HepG2 (cell line): ENCODE measurements at regions of chr5 and their contacts with region 1.

Region 1: GRCh38 chr5:135034236-135034962 is 371 bp upstream of the PITX1 start:
- DNase-seq: peak; percentile 52
- ATAC-seq: peak; percentile 72
- H3K4me3 ChIP-seq: peak overlapping the region; percentile 83 to 93 (median 89)
- H3K27ac ChIP-seq: peak overlapping the region; percentile 90
- H3K4me1 ChIP-seq: peaks cover 21% of the 10 kb centered on the region
- H3K27me3 ChIP-seq: no peaks in the 10 kb centered on the region
- CTCF ChIP-seq: no peak
- EP300 ChIP-seq: no peak
- POLR2A ChIP-seq: peak in 1 of 2 experiments; percentile 55; a peak in 2 of 4 replicates
- RAD21 ChIP-seq: peak; percentile 32; the same call in 1 of the 2 replicates

Region 2: GRCh38 chr5:134917070-134917815 is 117.2 kb before region 1 on chr5:
- CTCF ChIA-PET with region 1: no interaction called
- POLR2A ChIA-PET with region 1: interaction called, 4 read pairs
- in situ Hi-C with region 1: no loop called
- intact Hi-C with region 1: loop called (anchors 2 kb)
- DNase-seq: peak; percentile 18
- ATAC-seq: peak; percentile 87
- H3K4me3 ChIP-seq: no peak overlapping the region
- H3K27ac ChIP-seq: no peak overlapping the region
- H3K4me1 ChIP-seq: peaks cover 23% of the 10 kb centered on the region
- H3K27me3 ChIP-seq: no peaks in the 10 kb centered on the region
- CTCF ChIP-seq: peak; percentile 81
- EP300 ChIP-seq: no peak
- POLR2A ChIP-seq: no peak
- RAD21 ChIP-seq: peak; percentile 44; the same call in 1 of the 2 replicates

Region 3: DNA sequence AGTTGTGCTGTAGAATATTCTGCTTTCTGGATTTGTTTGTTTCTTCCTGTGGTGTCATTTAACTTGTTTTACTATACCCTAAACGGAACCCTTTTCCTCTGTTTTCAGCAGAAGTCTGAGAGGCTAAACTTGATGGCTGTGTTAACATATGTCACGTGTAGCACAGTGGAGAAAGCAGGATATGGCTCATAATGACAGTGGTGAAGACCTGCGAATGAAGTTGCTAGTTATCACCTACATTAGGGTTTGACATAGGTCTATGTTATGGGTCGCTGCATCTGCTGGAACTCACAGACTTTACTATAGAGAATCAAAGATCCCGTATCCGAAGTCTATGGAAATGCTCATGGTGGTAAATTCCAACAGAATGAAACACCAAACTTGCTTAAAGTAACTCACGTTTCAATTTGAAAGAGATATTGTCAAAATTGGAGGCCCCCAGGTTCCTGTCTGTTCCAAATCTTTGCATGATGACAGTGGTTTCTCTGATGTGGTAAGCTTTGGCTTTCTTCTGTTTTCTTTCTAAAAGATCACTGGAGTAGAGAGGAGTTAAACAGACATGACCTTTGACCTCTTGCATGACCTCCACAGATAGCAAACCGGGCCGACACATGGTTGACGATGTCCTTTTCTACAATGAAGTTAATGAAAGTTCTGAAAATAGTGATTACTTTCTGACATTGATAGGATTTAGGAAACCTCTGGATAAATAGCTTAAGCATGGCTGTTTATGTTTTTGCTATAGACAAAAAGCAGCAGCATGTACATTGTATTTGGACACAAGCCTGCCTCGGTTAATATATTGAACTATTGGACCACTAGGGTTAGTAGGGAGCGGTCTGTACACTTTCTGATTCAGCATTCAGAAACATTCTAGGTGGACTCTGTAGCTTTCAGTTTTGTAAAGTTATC is 69.8 kb before region 1 on chr5:
- CTCF ChIA-PET with region 1: no interaction called
- POLR2A ChIA-PET with region 1: interaction called, 6 read pairs
- in situ Hi-C with region 1: no loop called
- intact Hi-C with region 1: loop called (anchors 5 kb)
- DNase-seq: peak; percentile 92
- ATAC-seq: peak; percentile 83
- H3K4me3 ChIP-seq: peak overlapping the region in 2 of 3 experiments; percentile 10 to 35; a peak in 3 of 6 replicates
- H3K27ac ChIP-seq: peak overlapping the region; percentile 65
- H3K4me1 ChIP-seq: peaks cover 35% of the 10 kb centered on the region
- H3K27me3 ChIP-seq: no peaks in the 10 kb centered on the region
- CTCF ChIP-seq: no peak
- EP300 ChIP-seq: peak in 1 of 2 experiments; percentile 91; a peak in 2 of 4 replicates
- POLR2A ChIP-seq: no peak
- RAD21 ChIP-seq: no peak

Region 4: DNA sequence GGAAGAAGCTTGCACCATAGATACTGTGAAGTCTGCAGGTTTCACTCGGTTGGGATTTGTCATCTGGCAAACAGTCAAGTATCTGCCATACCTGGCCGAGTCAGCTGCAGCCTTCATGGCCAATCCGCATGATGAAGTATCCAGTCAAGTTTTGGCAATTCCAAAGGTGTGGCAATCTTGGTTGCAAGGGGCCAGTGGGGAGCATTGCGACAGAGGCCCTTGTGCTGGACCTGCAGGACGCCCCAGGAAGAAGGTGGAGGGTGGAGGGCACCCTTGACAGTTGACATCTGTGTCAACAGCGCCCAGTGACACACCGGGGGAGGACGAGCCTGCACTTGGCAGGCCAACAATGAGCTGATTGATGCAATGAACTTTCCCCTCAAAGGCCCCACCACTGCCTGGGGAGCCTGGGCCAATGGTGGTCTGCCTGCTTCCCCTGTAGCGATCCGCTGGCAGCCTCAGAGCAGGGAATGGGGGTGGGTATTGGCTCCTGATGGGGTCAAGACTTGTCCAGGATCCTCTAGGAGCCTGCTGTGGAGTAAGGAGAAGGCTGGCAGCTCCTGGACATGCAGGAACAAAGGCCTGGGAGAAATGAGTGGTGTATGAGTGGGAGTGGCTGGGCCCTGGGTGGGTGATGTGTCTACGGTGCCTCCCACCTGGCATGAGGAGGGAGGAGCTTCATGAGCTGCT is 122.5 kb after region 1 on chr5:
- CTCF ChIA-PET with region 1: no interaction called
- POLR2A ChIA-PET with region 1: interaction called, 24 read pairs
- in situ Hi-C with region 1: no loop called
- intact Hi-C with region 1: loop called (anchors 1 kb)
- DNase-seq: peak; percentile 98
- ATAC-seq: peak; percentile 95
- H3K4me3 ChIP-seq: peak overlapping the region; percentile 24 to 68 (median 25); a peak in 5 of 6 replicates
- H3K27ac ChIP-seq: peak overlapping the region; percentile 97
- H3K4me1 ChIP-seq: peaks cover 79% of the 10 kb centered on the region
- H3K27me3 ChIP-seq: no peaks in the 10 kb centered on the region
- CTCF ChIP-seq: peak; percentile 24; the same call in 1 of the 2 replicates
- EP300 ChIP-seq: peak; percentile 91 to 97
- POLR2A ChIP-seq: peak; percentile 51 to 83
- RAD21 ChIP-seq: 0 out of 2 replicates have a peak, but pooled peaks have one; percentile 36

Region 5: DNA sequence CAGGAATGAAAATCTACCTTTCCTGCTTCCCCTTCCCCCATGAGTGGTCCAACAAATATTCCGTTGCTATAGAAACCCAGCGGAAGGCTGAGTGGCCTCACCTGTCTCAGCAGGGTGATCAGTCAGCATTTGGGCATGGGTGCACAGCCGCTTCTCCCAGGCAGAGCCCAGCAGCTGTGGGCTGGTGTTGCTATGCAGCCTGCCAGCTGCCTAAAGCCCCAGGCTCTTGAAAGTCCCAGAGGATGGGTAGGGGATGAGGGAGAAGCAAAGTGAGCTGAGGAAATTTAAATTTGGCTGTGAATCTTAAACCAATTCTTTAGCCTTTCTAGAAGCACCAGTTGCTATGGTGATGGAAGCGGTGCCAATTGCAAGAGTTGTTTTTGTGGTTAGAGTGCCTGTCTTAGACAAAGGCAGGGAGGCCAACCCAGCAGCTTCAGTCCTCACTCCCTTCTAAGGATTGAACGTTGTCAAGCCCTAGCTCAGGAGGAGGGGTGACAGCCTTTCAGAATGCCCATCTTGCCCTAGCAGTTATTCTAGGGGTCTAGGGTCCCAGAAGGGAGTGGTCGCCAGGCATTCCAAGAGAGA is 151.2 kb after region 1 on chr5:
- CTCF ChIA-PET with region 1: no interaction called
- POLR2A ChIA-PET with region 1: interaction called, 7 read pairs
- in situ Hi-C with region 1: loop called (anchors 10 kb)
- intact Hi-C with region 1: loop called (anchors 5 kb)
- DNase-seq: no peak
- ATAC-seq: no peak
- H3K4me3 ChIP-seq: no peak overlapping the region
- H3K27ac ChIP-seq: no peak overlapping the region
- H3K4me1 ChIP-seq: peaks cover 10% of the 10 kb centered on the region
- H3K27me3 ChIP-seq: no peaks in the 10 kb centered on the region
- CTCF ChIP-seq: no peak
- EP300 ChIP-seq: no peak
- POLR2A ChIP-seq: no peak
- RAD21 ChIP-seq: no peak

Region 6: DNA sequence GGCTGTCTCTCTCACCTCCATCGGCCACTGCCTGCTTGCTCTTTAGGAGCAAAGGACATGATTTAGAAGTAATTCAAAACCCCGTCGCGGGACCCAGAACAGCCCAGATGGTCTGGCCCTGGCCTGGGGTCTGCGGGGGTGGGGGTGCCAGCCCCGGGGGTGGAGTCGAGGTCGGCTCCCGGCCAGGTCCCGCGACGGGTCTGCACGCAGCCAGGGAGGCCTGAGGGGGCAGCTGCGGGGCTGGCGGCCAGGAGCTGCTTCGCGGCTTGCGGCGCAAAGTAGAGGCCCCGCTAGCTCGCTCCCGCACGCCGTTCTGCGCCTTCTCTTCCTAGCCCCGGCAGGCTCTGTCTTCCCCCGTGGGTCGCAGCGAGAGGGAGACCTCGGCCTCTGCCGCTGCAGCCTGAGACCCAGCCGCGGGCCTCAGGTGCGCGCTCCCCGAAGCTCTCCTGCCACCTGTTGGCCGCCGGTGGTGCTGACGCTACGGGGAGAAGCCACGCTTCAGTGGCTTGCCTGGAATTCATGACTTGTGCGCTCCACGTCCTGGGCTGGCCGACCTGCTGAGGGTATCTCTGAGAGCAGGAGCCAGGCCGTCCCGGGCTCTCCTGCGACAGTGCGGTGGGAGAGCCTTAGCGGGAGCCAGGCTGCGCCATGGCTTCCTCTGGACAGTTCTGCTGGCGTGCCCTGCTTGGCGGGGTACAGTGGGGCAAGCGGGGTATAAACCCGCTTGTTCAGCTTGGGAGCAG is 156.9 kb after region 1 on chr5:
- CTCF ChIA-PET with region 1: no interaction called
- POLR2A ChIA-PET with region 1: interaction called, 7 read pairs
- in situ Hi-C with region 1: loop called (anchors 10 kb)
- intact Hi-C with region 1: loop called (anchors 5 kb)
- DNase-seq: peak; percentile 68
- ATAC-seq: peak; percentile 98
- H3K4me3 ChIP-seq: peak overlapping the region; percentile 72 to 82 (median 76)
- H3K27ac ChIP-seq: no peak overlapping the region
- H3K4me1 ChIP-seq: peaks cover 5% of the 10 kb centered on the region; the same call in 1 of the 2 replicates
- H3K27me3 ChIP-seq: no peaks in the 10 kb centered on the region; a peak in 1 of 5 replicates
- CTCF ChIP-seq: peak; percentile 100
- EP300 ChIP-seq: no peak
- POLR2A ChIP-seq: peak in 1 of 2 experiments; percentile 44; a peak in 1 of 4 replicates
- RAD21 ChIP-seq: peak; percentile 99

Region 7: GRCh38 chr5:135332519-135333150 is 298.2 kb after region 1 on chr5:
- CTCF ChIA-PET with region 1: no interaction called
- POLR2A ChIA-PET with region 1: no interaction called
- in situ Hi-C with region 1: loop called (anchors 10 kb)
- intact Hi-C with region 1: loop called (anchors 10 kb)
- DNase-seq: peak; percentile 59
- ATAC-seq: no peak
- H3K4me3 ChIP-seq: no peak overlapping the region
- H3K27ac ChIP-seq: no peak overlapping the region
- H3K4me1 ChIP-seq: peaks cover 35% of the 10 kb centered on the region
- H3K27me3 ChIP-seq: no peaks in the 10 kb centered on the region
- CTCF ChIP-seq: peak; percentile 78
- EP300 ChIP-seq: no peak
- POLR2A ChIP-seq: no peak
- RAD21 ChIP-seq: 0 out of 2 replicates have a peak, but pooled peaks have one; percentile 44